ENCODE measurements at regions of chr6 and their contacts with region 1.

Region 1: DNA sequence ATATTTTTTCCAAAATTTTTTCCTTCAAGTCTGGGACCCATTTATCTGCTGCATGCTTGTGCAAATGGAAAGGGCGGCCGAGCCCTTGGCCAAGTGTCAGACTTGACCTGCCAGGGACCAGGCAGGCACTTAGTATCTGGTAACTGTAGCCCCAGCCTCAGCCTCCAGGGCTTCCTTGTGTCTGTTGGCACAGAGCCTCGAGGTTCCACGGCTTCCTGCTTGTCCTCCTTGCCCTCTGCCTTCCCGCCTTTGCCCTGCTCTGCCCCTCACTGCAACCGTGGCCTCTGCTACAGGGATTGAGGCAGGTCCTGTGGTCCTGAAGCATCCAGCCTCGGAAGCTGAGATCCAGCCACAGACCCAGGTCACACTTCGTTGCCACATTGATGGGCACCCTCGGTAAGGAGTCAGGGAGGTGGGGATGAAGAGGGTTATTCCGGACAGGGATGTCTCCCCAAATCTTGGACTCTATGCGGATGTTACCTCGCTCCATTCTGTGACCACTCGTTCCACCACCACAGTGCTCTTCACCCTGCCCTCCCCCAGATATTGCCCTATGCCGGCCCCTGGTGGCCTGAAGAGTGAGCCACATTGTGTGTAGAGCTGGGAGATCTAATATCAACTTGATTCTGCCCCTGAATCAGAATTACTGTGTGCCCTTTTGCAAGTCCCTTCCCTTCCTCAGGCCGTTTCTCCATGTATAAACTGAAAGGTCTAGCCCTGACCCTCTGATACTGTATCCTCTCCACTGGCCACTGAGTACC is 41.5 kb upstream of the SRF start:
- DNase-seq: no peak
- H3K4me3 ChIP-seq: no peak overlapping the region
- H3K27me3 ChIP-seq: no peaks in the 10 kb centered on the region
- CTCF ChIP-seq: peak; percentile 89

Region 2: GRCh38 chr6:43070028-43070632 is 59.5 kb before region 1 on chr6:
- CTCF ChIA-PET with region 1: interaction called, 15 read pairs
- POLR2A ChIA-PET with region 1: no interaction called
- DNase-seq: no peak
- H3K4me3 ChIP-seq: no peak overlapping the region
- H3K27me3 ChIP-seq: no peaks in the 10 kb centered on the region
- CTCF ChIP-seq: peak; percentile 78

Region 3: GRCh38 chr6:43075670-43076463 is 53.7 kb before region 1 on chr6 and contains the start of gene PTK7:
- CTCF ChIA-PET with region 1: interaction called, 15 read pairs
- POLR2A ChIA-PET with region 1: interaction called, 7 read pairs
- DNase-seq: no peak
- H3K4me3 ChIP-seq: peak within 1 kb of the TSS; percentile 79
- H3K27me3 ChIP-seq: no peaks in the 10 kb centered on the region
- CTCF ChIP-seq: no peak
- polyA plus RNA-seq, gene PTK7: 187 and 362 TPM in 2 replicates

Region 4: DNA sequence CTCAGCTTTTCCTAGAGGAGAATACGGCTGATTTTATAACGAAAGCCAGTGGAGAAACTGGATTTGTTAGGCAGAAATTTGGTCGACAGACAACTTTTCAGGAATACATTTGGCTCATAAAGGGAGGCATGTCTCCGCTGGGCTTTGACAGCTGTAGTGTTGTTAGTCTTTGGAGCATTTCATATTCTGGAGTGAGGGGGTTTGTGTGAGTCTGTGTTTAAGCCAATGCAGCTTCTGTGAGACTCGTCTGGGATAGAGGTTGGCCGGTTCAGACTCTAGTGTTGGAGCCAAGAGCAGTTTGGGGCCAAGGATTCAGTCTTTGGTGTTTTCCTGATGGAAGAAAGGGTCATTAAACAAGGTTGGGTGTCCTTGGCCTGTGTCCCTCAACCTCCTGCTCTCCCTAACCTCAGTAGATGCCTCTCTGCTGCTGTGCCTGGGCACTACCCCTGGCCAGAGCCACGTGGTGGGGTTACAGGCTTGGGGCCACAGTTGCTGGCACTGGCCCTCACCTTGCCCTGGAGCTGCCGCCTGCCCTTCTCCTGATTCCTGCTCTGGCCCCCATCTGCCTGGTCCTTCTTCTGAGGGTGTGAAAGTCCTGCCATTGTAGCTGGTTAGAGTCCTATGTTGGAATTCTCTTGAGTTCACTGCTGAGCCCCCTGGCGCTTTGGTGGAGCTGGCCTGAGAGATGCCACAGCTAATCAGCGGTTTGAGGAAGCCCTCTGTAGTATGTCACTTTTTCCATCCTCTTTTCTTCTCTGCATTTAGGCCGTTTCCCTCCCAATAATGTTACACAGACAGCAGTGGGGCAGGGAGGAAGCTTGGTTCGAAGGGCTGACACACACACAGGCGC is 46.6 kb before region 1 on chr6:
- CTCF ChIA-PET with region 1: interaction called, 12 read pairs
- POLR2A ChIA-PET with region 1: no interaction called
- DNase-seq: no peak
- H3K4me3 ChIP-seq: no peak overlapping the region
- H3K27me3 ChIP-seq: no peaks in the 10 kb centered on the region
- CTCF ChIP-seq: no peak

Region 5: DNA sequence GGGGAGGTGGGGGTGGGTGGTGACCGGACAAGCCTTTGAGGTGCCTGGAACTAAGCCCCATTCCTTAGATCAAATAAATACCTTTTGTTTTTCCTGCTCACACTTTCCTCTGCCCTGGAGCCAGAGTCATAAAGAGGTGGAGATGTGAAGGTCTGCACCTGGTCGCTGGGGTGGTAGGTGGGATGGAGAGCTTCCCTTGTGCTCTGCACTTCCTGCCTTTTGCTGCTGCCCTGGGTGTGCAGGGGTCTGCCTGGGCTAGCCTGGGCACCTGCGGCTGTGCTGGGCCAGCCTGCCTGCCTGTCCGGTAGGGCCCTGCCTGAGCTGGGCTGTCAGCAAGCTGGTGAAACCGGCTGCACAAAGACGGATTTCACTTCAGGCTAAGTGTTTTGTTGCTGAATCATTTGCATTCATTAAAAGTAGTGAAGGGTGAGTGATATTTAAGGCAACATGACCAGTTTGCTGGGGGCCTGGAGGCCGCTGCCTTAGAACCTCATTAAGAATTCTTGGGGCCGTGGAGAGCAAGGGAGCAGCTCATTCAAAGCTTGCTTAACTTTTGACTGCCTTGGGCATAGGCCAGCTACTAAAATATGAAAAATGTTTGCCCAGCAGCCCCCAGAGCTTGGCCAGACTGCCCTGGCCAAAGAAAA is 33.0 kb before region 1 on chr6:
- CTCF ChIA-PET with region 1: interaction called, 12 read pairs
- POLR2A ChIA-PET with region 1: interaction called, 6 read pairs
- DNase-seq: peak; percentile 84
- H3K4me3 ChIP-seq: no peak overlapping the region
- H3K27me3 ChIP-seq: no peaks in the 10 kb centered on the region
- CTCF ChIP-seq: no peak

Measured in BJ (cell line).